Activated CD4-positive, alpha-beta memory T cell treated with anti-CD3 and anti-CD28 coated beads for 36 hours (primary cell): ENCODE measurements at regions of chr1 and their contacts with region 1.

Region 1: GRCh38 chr1:90834886-90835660 is 118.0 kb upstream of the BARHL2 start:
- DNase-seq: peak; percentile 46
- H3K4me3 Mint-ChIP-seq: no peak overlapping the region
- H3K27ac Mint-ChIP-seq: no peak overlapping the region
- H3K4me1 Mint-ChIP-seq: peaks cover 23% of the 10 kb centered on the region
- H3K27me3 Mint-ChIP-seq: peaks cover 79% of the 10 kb centered on the region

Region 2: DNA sequence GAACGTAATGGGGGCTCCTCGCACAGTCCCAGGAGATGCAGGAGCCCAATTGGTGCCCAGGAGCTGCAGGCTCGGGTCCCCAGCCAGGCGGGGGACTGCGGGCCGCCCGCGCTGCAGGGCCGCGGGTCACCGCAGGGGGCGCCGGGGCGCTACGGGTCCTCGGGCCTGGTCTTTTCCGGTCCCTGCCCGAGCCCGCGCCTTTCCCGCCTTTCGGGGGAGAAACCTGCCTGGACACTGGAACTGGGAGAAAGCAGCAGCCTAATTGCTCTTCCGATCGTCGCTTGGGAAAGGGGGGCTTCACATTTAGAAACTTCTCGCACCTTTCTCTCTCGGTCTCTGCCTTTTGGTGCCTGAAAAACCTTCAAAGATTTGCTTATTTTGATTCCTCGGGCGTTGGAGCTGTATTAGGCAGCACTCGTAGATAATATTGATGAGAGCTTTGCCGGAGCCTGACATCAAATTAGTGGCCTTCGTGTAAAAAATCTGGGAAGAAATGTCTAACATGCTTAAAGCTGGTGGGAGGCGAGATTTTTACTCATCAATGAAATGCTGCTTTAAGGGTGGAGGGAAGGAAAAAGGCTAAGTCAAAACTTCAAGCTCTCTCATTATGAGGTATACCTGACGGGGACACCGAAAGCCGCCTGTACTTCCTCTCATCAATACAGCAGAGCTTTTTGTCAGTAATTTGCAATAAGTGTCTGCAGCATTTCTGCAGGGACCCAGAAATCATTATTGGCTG is 105.4 kb before region 1 on chr1:
- CTCF ChIA-PET with region 1: interaction called, 3 read pairs
- POLR2A ChIA-PET with region 1: no interaction called
- intact Hi-C with region 1: loop called (anchors 2 kb)
- DNase-seq: peak; percentile 41
- H3K4me3 Mint-ChIP-seq: peak overlapping the region; percentile 33
- H3K27ac Mint-ChIP-seq: no peak overlapping the region
- H3K4me1 Mint-ChIP-seq: peaks cover 40% of the 10 kb centered on the region
- H3K27me3 Mint-ChIP-seq: peaks cover 78% of the 10 kb centered on the region

Region 3: GRCh38 chr1:91124989-91125417 is 289.9 kb after region 1 on chr1:
- CTCF ChIA-PET with region 1: no interaction called
- POLR2A ChIA-PET with region 1: no interaction called
- intact Hi-C with region 1: loop called (anchors 10 kb)
- DNase-seq: peak; percentile 67
- H3K4me3 Mint-ChIP-seq: peak overlapping the region; percentile 24
- H3K27ac Mint-ChIP-seq: peak overlapping the region; percentile 73
- H3K4me1 Mint-ChIP-seq: peaks cover 19% of the 10 kb centered on the region
- H3K27me3 Mint-ChIP-seq: peaks cover 3% of the 10 kb centered on the region

Region 4: DNA sequence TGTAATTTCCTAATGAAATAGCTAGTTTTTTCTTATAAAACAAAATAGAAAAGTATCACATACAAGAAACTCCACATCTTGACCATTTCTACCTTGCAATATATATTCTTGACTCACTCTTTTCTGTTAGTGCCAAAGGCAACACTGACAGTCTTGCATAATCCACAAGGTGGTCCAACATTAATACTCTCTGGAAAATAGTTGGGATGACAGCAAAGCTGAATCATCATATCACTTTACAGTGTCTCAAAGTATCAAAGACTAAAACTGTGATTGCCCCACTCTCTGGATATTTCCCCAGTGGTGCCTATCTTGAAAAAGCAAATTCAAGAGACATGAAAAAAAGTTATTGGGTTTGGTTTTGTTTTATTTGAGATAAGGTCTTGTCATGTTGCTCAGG is 1065.5 kb after region 1 on chr1:
- CTCF ChIA-PET with region 1: no interaction called
- POLR2A ChIA-PET with region 1: no interaction called
- intact Hi-C with region 1: loop called (anchors 10 kb)
- DNase-seq: no peak
- H3K4me3 Mint-ChIP-seq: no peak overlapping the region
- H3K27ac Mint-ChIP-seq: no peak overlapping the region
- H3K4me1 Mint-ChIP-seq: peaks cover 8% of the 10 kb centered on the region
- H3K27me3 Mint-ChIP-seq: peaks cover 3% of the 10 kb centered on the region